Activated CD4-positive, alpha-beta T cell treated with anti-CD3 and anti-CD28 coated beads for 36 hours (primary cell): ENCODE measurements at regions of chr15 and their contacts with region 1.

Region 1: DNA sequence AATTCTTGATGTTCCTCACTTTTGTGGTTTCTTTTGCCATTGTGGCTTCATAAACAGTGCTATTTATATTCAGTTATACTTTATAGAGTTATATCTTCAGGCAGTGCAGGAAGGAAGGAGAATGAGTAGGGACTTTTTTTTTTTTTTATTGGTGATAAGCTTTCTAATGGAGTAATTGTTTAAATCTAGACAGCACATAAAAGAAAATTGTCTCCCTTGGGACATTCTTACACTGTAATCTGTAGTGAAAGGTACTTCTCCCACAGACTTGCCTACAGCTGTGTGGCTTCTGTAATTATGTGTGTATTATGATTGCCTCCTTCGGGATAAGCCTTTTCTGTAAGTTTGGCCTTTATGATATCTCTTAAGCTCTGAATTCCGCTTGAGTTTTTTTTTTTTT is 41.6 kb downstream of the WDR76 start:
- DNase-seq: no peak
- ATAC-seq: no peak
- H3K4me3 Mint-ChIP-seq: no peak overlapping the region
- H3K27ac Mint-ChIP-seq: no peak overlapping the region
- H3K4me1 Mint-ChIP-seq: no peaks in the 10 kb centered on the region
- H3K27me3 Mint-ChIP-seq: no peaks in the 10 kb centered on the region

Region 2: GRCh38 chr15:43845421-43845820 is 23.0 kb before region 1 on chr15:
- CTCF ChIA-PET with region 1: interaction called, 3 read pairs
- POLR2A ChIA-PET with region 1: no interaction called
- intact Hi-C with region 1: loop called in 1 of 2 experiments (anchors 2 kb)
- DNase-seq: no peak
- ATAC-seq: no peak
- H3K4me3 Mint-ChIP-seq: no peak overlapping the region
- H3K27ac Mint-ChIP-seq: no peak overlapping the region
- H3K4me1 Mint-ChIP-seq: no peaks in the 10 kb centered on the region
- H3K27me3 Mint-ChIP-seq: no peaks in the 10 kb centered on the region